ENCODE measurements at regions of chr4 and their contacts with region 1.

Region 1: DNA sequence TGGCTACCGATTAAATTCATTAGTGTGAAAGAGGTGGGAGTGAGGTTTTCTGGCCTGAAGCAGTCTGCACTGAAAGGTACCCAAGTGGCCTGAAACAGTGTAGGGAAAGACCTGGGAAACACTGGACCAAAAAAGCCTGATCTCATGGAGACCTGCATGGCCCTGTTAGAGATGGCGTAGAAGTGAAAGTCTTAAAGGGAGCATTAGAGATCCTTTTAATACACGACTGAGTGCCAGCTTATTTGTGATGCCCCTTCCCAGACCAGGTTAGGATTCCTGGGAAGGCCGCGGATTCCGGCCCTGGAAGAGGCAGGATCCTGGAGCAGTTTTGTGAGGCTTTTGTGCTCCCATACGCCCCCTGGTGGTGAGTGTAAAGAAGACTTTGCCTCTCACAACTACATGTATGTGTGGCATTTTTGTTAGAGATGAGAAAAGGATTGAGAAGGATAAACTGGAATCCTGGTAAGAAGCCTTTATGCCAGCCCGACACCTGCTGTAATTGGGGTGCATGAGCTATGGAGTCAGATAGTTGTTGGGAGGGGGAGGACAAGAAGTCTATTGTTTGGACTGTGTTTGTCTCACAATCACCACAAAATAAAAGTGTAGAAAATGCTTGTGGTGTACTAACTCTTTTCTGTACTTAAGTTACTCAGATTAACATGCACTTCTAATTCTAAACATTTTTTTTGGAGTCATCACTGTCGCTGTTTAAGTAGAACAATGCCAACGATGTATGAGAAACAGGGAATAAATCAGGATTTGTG is 54.0 kb downstream of the JADE1 start:
- DNase-seq: peak; percentile 88
- H3K4me3 ChIP-seq: no peak overlapping the region
- H3K27ac ChIP-seq: no peak overlapping the region
- H3K4me1 ChIP-seq: peaks cover 0 to 45% (median 37%) of the 10 kb centered on the region in 4 donors
- H3K27me3 ChIP-seq: no peaks in the 10 kb centered on the region
- CTCF ChIP-seq: peak; percentile 50 to 91 (median 84)
- EP300 ChIP-seq: no peak
- POLR2A ChIP-seq: no peak

Region 2: GRCh38 chr4:128191115-128191781 is 672.2 kb before region 1 on chr4:
- intact Hi-C with region 1: loop called (anchors 1 kb)
- DNase-seq: peak; percentile 77
- H3K4me3 ChIP-seq: no peak overlapping the region
- H3K27ac ChIP-seq: no peak overlapping the region
- H3K4me1 ChIP-seq: peaks cover 0 to 9% (median 2%) of the 10 kb centered on the region in 4 donors
- H3K27me3 ChIP-seq: no peaks in the 10 kb centered on the region
- CTCF ChIP-seq: peak; percentile 78 to 86 (median 84)
- EP300 ChIP-seq: no peak
- POLR2A ChIP-seq: no peak

Region 3: DNA sequence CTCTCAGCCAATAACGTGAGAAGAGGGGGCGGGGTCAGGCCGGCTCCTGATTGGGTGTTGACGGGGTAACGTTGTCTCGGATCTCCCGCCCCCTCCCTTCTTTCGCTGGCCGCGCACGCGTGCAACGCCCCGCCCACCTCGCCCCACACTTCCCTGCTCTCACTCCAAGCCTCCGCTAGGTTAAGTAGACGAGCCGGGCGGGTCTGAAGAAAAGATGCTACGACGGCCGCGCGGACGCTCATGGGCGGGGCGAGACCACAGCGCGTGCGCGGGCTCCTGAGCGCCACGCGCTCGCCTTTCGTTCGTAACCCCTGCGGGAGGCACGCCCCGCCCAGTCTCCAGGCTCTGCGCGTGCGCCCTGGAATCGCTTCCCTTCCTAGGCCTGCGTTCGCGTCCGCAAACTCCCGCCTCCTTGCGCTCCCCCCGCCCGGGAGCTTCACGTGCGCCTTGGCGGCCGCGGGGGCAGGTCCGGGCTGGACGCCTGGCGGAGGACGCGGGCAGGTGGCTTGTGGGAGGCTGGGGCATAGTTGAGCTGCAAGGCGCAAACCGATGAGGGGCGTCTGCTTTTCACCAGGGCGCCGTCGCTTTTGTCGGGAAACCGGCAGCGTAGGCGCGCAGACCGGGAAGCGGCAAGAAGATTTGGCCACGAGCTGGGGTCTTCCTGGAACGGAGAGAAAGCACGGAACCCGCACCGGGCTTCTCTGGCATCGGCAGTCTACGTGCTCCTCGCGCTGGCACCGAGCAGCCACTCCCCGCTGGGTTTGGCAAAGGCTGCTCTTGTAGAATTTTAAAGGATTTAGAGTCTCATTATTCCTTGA is 575.4 kb before region 1 on chr4:
- intact Hi-C with region 1: loop called (anchors 10 kb)
- DNase-seq: peak; percentile 100
- H3K4me3 ChIP-seq: peak overlapping the region; percentile 75 to 90 (median 88)
- H3K27ac ChIP-seq: peak overlapping the region; percentile 89 to 97 (median 94)
- H3K4me1 ChIP-seq: peaks cover 0 to 38% (median 25%) of the 10 kb centered on the region in 4 donors
- H3K27me3 ChIP-seq: no peaks in the 10 kb centered on the region
- CTCF ChIP-seq: peak in 3 of 4 experiments; percentile 30 to 37 (median 32)
- EP300 ChIP-seq: peak in 2 of 4 donors; percentile 61 to 63
- POLR2A ChIP-seq: peak; percentile 47 to 53

Region 4: GRCh38 chr4:128454281-128455075 is 409.0 kb before region 1 on chr4:
- intact Hi-C with region 1: loop called (anchors 1 kb)
- DNase-seq: peak; percentile 95
- H3K4me3 ChIP-seq: no peak overlapping the region
- H3K27ac ChIP-seq: peak overlapping the region in 2 of 4 donors; percentile 27 to 49
- H3K4me1 ChIP-seq: peaks cover 0 to 48% (median 30%) of the 10 kb centered on the region in 4 donors
- H3K27me3 ChIP-seq: no peaks in the 10 kb centered on the region
- CTCF ChIP-seq: peak; percentile 73 to 86 (median 76)
- EP300 ChIP-seq: no peak
- POLR2A ChIP-seq: no peak

Region 5: DNA sequence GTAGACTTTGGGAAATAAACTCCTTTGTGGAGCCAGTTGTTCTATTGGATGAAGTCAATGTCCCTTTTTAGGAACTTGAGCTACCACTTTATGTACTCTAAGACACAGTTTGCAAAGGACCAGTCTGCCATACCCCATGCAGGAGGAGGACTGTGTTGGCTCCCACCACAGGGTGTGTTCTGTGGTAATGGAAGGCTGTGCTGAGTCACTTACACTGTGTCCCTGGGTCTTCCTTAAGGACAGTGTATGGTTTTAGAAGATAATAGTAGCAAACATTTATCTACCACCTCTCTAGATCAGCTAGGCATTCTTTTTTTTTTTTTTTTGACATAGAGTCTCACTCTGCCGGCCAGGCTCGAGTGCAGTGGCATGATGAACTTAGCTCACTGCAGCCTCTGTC is 391.9 kb before region 1 on chr4:
- intact Hi-C with region 1: loop called (anchors 5 kb)
- DNase-seq: no peak
- H3K4me3 ChIP-seq: no peak overlapping the region
- H3K27ac ChIP-seq: no peak overlapping the region
- H3K4me1 ChIP-seq: peaks cover 0 to 17% (median 15%) of the 10 kb centered on the region in 4 donors
- H3K27me3 ChIP-seq: no peaks in the 10 kb centered on the region
- CTCF ChIP-seq: no peak
- EP300 ChIP-seq: no peak
- POLR2A ChIP-seq: no peak

Region 6: GRCh38 chr4:128565565-128566186 is 297.8 kb before region 1 on chr4:
- intact Hi-C with region 1: loop called (anchors 5 kb)
- DNase-seq: peak; percentile 72
- H3K4me3 ChIP-seq: no peak overlapping the region
- H3K27ac ChIP-seq: no peak overlapping the region
- H3K4me1 ChIP-seq: peaks cover 0 to 32% (median 20%) of the 10 kb centered on the region in 4 donors
- H3K27me3 ChIP-seq: no peaks in the 10 kb centered on the region
- CTCF ChIP-seq: peak; percentile 22 to 68 (median 62)
- EP300 ChIP-seq: no peak
- POLR2A ChIP-seq: no peak

Region 7: DNA sequence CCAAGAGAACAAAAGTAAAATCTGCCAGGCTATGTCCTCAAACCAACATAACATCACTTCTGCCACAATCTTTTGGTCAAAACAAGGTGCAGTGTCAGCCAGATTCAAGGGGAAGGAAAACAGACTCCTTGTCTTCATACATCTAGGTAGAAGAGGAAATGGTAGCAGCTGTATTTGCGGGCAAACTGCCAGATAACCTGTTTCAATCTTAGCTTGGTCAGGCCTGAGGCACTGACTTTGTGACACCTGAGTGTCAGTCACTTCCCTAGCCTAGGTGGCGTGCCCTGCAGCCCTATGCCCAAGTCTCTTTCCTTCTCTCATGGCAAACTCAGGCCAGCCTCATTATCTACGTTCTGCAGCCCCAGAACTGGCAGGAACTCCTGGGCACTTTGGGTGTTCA is 200.2 kb before region 1 on chr4:
- intact Hi-C with region 1: loop called (anchors 5 kb)
- DNase-seq: no peak
- H3K4me3 ChIP-seq: no peak overlapping the region
- H3K27ac ChIP-seq: no peak overlapping the region
- H3K4me1 ChIP-seq: peaks cover 0 to 50% (median 40%) of the 10 kb centered on the region in 4 donors
- H3K27me3 ChIP-seq: no peaks in the 10 kb centered on the region
- CTCF ChIP-seq: no peak
- EP300 ChIP-seq: no peak
- POLR2A ChIP-seq: no peak